ENCODE measurements at regions of chr20 and their contacts with region 1.

Region 1: GRCh38 chr20:17682103-17682888 is at the start of gene RRBP1:
- DNase-seq: peak; percentile 91
- ATAC-seq: peak; percentile 90
- H3K4me3 ChIP-seq: peak within 1 kb of the TSS; percentile 78 to 82
- H3K27ac ChIP-seq: peak within 1 kb of the TSS; percentile 91
- H3K4me1 ChIP-seq: peaks cover 24 to 33% of the 10 kb centered on the region in 2 experiments
- H3K27me3 ChIP-seq: peaks cover 12% of the 10 kb centered on the region; the same call in 1 of the 2 replicates
- CTCF ChIP-seq: peak; percentile 38 to 93 (median 82); a peak in 5 of 6 replicates
- POLR2A ChIP-seq: peak; percentile 69
- RAD21 ChIP-seq: 0 out of 2 replicates have a peak, but pooled peaks have one; percentile 22
- total RNA-seq, gene RRBP1: 123 TPM

Region 2: GRCh38 chr20:17558154-17558940 is 123.9 kb before region 1 on chr20:
- CTCF ChIA-PET with region 1: no interaction called
- POLR2A ChIA-PET with region 1: interaction called, 10 read pairs
- RAD21 ChIA-PET with region 1: no interaction called
- intact Hi-C with region 1: no loop called
- DNase-seq: peak; percentile 88
- ATAC-seq: peak; percentile 81
- H3K4me3 ChIP-seq: peak overlapping the region; percentile 46 to 56
- H3K27ac ChIP-seq: peak overlapping the region; percentile 91
- H3K4me1 ChIP-seq: peaks cover 46 to 71% of the 10 kb centered on the region in 2 experiments
- H3K27me3 ChIP-seq: no peaks in the 10 kb centered on the region
- CTCF ChIP-seq: no peak
- POLR2A ChIP-seq: peak; percentile 66
- RAD21 ChIP-seq: 0 out of 2 replicates have a peak, but pooled peaks have one; percentile 17

Region 3: DNA sequence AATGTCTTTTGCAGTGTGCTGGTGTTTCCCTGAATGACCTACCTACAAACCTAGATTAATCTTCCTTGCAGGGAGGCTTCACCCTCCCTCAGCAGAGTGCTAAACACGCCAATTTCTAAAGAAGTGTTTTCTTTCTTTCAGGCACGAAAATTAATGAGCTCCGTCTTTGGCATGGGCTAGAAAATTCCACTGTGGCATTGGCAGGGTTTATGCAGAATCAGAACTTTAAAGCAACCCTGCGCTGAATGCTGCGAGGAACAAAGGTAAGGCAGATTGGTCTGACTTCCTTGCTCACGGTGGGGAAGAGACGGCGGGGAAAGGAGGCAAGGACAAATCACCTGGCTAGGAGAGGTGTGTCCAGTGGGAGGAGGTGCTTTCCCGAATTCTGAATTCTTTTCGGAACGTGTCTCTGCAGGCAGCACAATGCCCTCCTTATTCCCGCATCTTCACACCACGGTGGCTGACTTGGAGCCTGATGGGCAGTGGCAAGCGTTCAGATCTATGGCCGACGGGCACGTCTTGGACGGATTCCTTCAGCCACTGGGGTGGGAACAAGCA is 11.2 kb after region 1 on chr20:
- CTCF ChIA-PET with region 1: interaction called, 18 read pairs
- POLR2A ChIA-PET with region 1: interaction called, 6 read pairs
- RAD21 ChIA-PET with region 1: no interaction called
- intact Hi-C with region 1: no loop called
- DNase-seq: no peak
- ATAC-seq: no peak
- H3K4me3 ChIP-seq: no peak overlapping the region
- H3K27ac ChIP-seq: no peak overlapping the region
- H3K4me1 ChIP-seq: no peaks in the 10 kb centered on the region
- H3K27me3 ChIP-seq: no peaks in the 10 kb centered on the region; the same call in 1 of the 2 replicates
- CTCF ChIP-seq: no peak
- POLR2A ChIP-seq: no peak
- RAD21 ChIP-seq: no peak

Region 4: DNA sequence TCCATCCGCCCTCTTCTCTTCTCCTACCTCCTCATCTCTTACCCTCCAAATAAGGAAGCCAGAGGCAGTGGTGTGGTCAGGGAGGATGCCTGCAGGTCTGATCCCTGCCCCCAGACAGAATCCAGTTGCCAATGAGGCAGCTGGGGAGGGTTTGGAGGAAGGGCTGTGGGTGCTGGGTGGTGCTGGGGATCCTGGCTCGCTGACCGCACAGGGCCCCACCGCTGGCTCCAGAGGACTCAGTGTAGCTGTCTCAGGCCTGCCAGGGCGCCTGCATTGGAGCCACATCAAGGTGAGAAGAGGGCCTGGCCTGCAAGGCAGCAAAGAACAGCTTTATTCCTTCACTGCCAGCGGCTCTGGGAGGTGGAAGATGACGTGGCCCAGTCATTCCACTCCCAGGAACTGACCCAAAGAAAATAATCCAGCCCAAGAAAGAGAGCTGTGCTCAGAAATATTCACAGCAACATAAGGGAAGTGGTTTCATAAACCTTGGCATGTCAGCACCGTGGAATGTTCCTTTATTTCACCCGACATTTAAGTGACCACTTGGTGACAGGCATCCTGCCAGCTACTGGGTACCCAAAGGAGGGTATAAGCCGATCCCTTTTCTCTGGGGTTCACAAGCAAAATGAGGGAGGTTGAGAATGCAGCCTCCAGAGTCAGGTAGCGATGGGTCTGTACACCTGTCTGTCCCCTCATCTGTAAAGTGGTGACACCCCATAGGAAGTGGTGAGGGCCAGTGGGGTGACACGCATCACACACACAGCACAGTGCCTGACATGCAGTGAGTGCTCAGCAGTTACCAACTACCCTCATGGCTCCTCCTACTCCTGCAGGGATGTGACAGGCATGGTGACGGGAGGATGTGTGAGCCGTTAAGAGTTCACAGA is 161.2 kb after region 1 on chr20:
- CTCF ChIA-PET with region 1: interaction called, 7 read pairs
- POLR2A ChIA-PET with region 1: interaction called, 4 read pairs
- RAD21 ChIA-PET with region 1: no interaction called
- intact Hi-C with region 1: loop called (anchors 2 kb)
- DNase-seq: peak; percentile 88
- ATAC-seq: peak; percentile 86
- H3K4me3 ChIP-seq: peak overlapping the region; percentile 40 to 50
- H3K27ac ChIP-seq: peak overlapping the region; percentile 99
- H3K4me1 ChIP-seq: peaks cover 61 to 75% of the 10 kb centered on the region in 2 experiments
- H3K27me3 ChIP-seq: no peaks in the 10 kb centered on the region
- CTCF ChIP-seq: no peak
- POLR2A ChIP-seq: no peak
- RAD21 ChIP-seq: no peak

Region 5: GRCh38 chr20:17873410-17874270 is 191.3 kb after region 1 on chr20:
- CTCF ChIA-PET with region 1: interaction called, 15 read pairs
- POLR2A ChIA-PET with region 1: interaction called, 6 read pairs
- RAD21 ChIA-PET with region 1: no interaction called
- intact Hi-C with region 1: no loop called
- DNase-seq: peak; percentile 57
- ATAC-seq: peak; percentile 92
- H3K4me3 ChIP-seq: peak overlapping the region; percentile 19 to 30
- H3K27ac ChIP-seq: peak overlapping the region; percentile 28; the same call in 1 of the 2 replicates
- H3K4me1 ChIP-seq: peaks cover 23 to 32% of the 10 kb centered on the region in 2 experiments
- H3K27me3 ChIP-seq: peaks cover 6% of the 10 kb centered on the region; the same call in 1 of the 2 replicates
- CTCF ChIP-seq: no peak
- POLR2A ChIP-seq: no peak
- RAD21 ChIP-seq: no peak

Region 6: GRCh38 chr20:17898548-17898994 is 216.3 kb after region 1 on chr20:
- CTCF ChIA-PET with region 1: interaction called, 11 read pairs
- POLR2A ChIA-PET with region 1: interaction called, 9 read pairs
- RAD21 ChIA-PET with region 1: interaction called in 1 of 2 experiments, 4 read pairs
- intact Hi-C with region 1: loop called (anchors 1 kb)
- DNase-seq: peak; percentile 56
- ATAC-seq: peak; percentile 77
- H3K4me3 ChIP-seq: no peak overlapping the region
- H3K27ac ChIP-seq: no peak overlapping the region
- H3K4me1 ChIP-seq: peaks cover 0 to 7% of the 10 kb centered on the region in 2 experiments; a peak in 2 of 4 replicates
- H3K27me3 ChIP-seq: no peaks in the 10 kb centered on the region
- CTCF ChIP-seq: peak; percentile 88 to 89 (median 89)
- POLR2A ChIP-seq: no peak
- RAD21 ChIP-seq: peak; percentile 96

Region 7: DNA sequence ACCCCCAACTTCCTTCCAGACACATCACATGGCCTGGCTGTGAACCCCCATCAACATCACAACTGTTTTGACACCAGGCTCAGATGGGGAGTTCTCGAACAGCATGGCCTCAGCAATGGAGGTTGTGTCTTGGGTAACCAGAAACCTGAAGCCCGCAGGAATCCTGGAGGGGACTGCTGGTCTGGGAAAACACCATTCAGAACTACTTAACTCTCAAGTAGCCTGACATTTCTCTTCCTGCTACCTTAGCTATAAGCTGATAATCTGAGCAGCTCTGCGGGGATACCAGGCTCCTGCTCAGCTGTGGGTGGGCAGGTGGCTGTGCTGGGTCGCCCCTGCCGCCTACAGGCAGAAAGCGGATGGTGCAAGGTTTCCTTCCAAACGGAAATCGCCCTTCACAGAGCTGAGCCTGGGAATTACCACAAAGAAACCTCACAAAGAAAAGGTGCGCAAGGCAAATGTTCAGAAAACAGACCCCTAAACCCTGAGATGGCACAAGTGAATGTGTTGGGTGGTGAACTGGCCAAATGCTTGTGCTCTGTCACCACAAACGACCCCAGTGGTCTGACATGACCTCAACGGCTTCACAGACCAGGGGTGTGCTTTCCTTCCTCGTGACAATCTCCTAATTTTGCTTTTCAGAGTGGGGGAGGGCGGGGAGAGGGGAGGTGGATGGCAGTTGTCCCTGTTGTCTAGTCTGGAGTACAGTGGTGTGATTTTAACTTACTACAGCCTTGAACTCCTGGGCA is 256.7 kb after region 1 on chr20:
- CTCF ChIA-PET with region 1: interaction called, 18 read pairs
- POLR2A ChIA-PET with region 1: interaction called, 3 read pairs
- RAD21 ChIA-PET with region 1: interaction called in 1 of 2 experiments, 4 read pairs
- intact Hi-C with region 1: loop called (anchors 2 kb)
- DNase-seq: peak; percentile 22
- ATAC-seq: peak; percentile 85
- H3K4me3 ChIP-seq: no peak overlapping the region
- H3K27ac ChIP-seq: peak overlapping the region; percentile 24; the same call in 1 of the 2 replicates
- H3K4me1 ChIP-seq: peaks cover 0 to 11% of the 10 kb centered on the region in 2 experiments; a peak in 1 of 4 replicates
- H3K27me3 ChIP-seq: no peaks in the 10 kb centered on the region
- CTCF ChIP-seq: peak; percentile 66 to 95 (median 92); a peak in 5 of 6 replicates
- POLR2A ChIP-seq: no peak
- RAD21 ChIP-seq: peak; percentile 88

Measured in HCT116 (cell line).